ENCODE measurements at regions of chr16 and their contacts with region 1.

Region 1: DNA sequence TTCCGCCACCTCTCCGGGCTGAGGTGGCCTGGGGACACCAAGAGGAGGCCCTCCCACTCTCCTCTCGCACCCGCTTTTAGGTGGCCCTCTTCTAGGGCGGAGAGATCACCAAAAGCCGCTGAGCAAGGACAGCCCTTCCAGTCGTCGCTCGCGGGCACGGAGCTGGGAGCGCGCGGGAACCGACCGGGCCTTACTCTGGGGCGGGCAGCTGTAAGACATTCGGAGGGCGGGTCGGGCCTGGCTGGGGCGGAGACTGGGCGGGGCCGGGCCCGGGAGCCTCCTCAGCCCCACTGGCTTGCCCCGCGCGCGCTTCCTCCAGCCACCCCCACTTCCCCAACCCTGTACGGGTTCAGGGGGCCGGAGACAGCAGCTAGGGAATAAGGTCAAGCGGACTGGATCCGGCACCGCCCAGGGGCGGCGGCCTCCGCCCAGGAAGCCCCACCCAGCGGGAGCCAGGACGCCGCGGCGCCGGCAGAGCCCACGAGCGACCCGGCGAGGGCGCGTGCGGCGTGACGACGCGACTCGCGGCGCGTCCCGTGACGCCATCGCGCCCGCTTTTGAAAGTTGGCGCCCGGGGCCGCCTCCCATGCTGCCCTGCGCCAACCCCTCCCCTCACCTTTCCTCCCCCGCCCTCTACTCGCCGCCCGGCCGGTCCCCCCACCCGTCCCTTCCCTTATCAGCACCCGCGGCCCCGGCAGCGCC is 351 bp upstream of the CTCF start:
- DNase-seq: peak; percentile 99
- ATAC-seq: peak; percentile 87
- H3K4me3 Mint-ChIP-seq: peak overlapping the region; percentile 84
- H3K27ac Mint-ChIP-seq: peak overlapping the region; percentile 85
- H3K4me1 Mint-ChIP-seq: peaks cover 41% of the 10 kb centered on the region
- H3K27me3 Mint-ChIP-seq: no peaks in the 10 kb centered on the region

Region 2: DNA sequence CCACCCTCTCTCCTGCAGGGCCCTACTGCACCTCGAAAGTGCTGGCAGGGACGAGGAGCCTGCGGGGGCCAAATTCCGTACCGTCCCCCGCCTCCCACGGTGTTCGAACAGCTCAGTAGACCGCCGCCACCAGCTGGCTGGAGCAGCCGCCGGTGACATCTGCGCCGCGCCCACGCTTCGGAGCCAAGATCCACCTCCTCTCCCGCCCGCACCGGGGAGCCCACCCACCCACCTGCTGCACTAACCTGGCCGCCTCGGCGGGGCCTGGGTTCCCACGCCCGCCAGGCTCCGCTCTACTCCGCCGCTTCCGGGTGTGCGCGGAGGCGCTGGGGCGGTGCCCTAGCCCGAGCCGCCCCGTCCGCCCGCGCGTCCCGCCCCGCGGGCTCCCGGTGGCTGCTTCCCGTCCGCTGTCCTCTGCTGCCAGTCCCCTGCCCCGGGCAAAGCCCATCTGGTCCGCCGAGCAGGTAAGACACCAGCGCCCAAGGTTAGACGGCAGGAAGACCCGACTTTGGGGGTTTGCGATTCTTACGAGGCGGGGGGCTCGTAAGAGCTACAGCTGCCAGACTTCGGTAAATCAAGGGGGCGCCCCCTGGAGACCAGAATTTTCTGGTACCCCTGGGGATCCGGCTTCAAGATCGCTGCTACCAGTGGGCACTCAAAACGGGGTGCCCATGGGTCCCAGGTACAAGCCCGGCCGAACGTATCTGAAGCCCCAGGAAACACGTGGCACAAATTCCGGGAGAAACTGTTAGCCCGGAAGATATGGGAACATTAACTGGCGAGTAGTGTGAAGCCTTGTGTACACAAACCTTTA is 402.2 kb before region 1 on chr16 and contains the starts of genes FBXL8 and TRADD:
- CTCF ChIA-PET with region 1: no interaction called
- POLR2A ChIA-PET with region 1: no interaction called
- intact Hi-C with region 1: loop called in 1 of 2 experiments (anchors 1 kb)
- DNase-seq: peak; percentile 88
- ATAC-seq: peak; percentile 63
- H3K4me3 Mint-ChIP-seq: peak within 1 kb of the TSS; percentile 91
- H3K27ac Mint-ChIP-seq: peak within 1 kb of the TSS; percentile 93
- H3K4me1 Mint-ChIP-seq: peaks cover 48% of the 10 kb centered on the region
- H3K27me3 Mint-ChIP-seq: peaks cover 12% of the 10 kb centered on the region
- total RNA-seq, gene FBXL8: 15.5 to 21.0 TPM
- total RNA-seq, gene TRADD: 22.0 to 34.0 TPM

Region 3: GRCh38 chr16:67246934-67247697 is 314.9 kb before region 1 on chr16 and contains the start of gene FHOD1:
- CTCF ChIA-PET with region 1: no interaction called
- POLR2A ChIA-PET with region 1: no interaction called
- intact Hi-C with region 1: loop called in 1 of 2 experiments (anchors 1 kb)
- DNase-seq: peak; percentile 99
- ATAC-seq: peak; percentile 74
- H3K4me3 Mint-ChIP-seq: peak within 1 kb of the TSS; percentile 87
- H3K27ac Mint-ChIP-seq: peak within 1 kb of the TSS; percentile 85
- H3K4me1 Mint-ChIP-seq: peaks cover 52% of the 10 kb centered on the region
- H3K27me3 Mint-ChIP-seq: peaks cover 11% of the 10 kb centered on the region
- total RNA-seq, gene FHOD1: 75.5 to 77.2 TPM

Region 4: GRCh38 chr16:67521095-67521804 is 40.7 kb before region 1 on chr16:
- CTCF ChIA-PET with region 1: interaction called, 8 read pairs
- POLR2A ChIA-PET with region 1: interaction called, 4 read pairs
- intact Hi-C with region 1: loop called (anchors 1 kb)
- DNase-seq: peak; percentile 99
- ATAC-seq: peak; percentile 94
- H3K4me3 Mint-ChIP-seq: peak overlapping the region; percentile 80
- H3K27ac Mint-ChIP-seq: peak overlapping the region; percentile 97
- H3K4me1 Mint-ChIP-seq: peaks cover 10% of the 10 kb centered on the region
- H3K27me3 Mint-ChIP-seq: no peaks in the 10 kb centered on the region

Region 5: DNA sequence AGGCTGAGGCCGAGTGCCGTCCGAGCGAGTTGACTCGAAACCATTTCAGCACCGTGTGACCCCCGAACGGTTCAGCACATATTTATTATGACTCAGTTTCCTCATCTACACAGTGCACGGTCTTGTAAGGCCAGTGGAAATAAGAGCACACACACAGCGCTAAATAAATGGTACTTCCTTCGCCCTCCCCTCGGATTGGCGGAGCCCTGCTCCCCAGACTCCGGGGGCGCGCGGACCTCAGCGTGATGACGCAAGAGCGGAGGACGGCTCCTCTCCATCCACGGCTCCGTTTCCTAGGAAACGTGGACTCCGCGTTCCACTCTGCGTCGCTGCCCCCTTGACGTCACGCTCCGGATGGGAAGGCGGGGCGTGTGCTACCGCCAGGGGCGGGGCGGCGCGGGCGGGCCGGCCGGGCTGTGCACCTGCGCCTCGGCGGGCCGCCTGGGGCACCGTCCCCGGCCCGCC is 98.6 kb after region 1 on chr16 and contains the start of gene PARD6A:
- CTCF ChIA-PET with region 1: interaction called, 19 read pairs
- POLR2A ChIA-PET with region 1: interaction called, 13 read pairs
- intact Hi-C with region 1: loop called (anchors 1 kb)
- DNase-seq: peak; percentile 98
- ATAC-seq: peak; percentile 83
- H3K4me3 Mint-ChIP-seq: peak within 1 kb of the TSS; percentile 90
- H3K27ac Mint-ChIP-seq: peak within 1 kb of the TSS; percentile 91
- H3K4me1 Mint-ChIP-seq: peaks cover 21% of the 10 kb centered on the region
- H3K27me3 Mint-ChIP-seq: no peaks in the 10 kb centered on the region
- total RNA-seq, gene PARD6A: 7.8 to 8.7 TPM

Region 6: DNA sequence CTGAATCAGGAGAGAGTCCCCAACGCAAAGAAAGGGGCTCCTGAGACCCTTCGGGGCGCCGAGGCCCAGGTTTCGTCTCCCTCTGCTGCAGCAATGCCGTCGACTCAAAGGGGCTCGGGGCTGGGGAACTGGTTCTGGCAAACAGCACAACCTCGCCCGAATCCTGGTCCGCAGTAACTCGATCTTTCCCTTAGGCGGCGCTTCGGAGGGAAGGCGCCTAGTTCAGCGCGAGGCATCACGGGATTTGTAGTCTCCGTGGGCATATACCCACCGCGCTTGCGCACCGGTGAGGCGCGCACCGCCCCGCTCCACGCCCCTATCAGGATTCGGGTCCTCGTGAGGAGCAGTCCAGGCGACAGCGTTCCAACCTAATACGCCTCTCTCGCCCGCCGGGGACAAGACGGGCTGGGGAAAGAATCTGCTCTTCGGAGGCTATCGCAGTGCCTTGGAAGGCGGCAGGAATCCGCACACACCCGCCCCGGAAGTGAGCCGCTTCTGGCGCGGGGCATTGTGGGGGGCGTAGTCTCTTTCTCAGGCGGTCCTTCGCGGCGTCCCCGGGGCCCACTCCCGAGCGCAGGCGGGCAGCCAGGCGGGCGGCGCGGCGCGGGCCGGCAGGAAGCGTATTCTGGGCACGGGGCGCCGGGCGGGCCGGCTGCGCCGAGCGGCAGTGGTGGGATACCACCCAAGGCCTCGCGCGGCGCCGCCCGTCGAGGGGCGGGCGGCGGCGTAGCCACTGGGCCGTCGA is 280.0 kb after region 1 on chr16 and contains the start of gene THAP11:
- CTCF ChIA-PET with region 1: no interaction called
- POLR2A ChIA-PET with region 1: no interaction called
- intact Hi-C with region 1: loop called in 1 of 2 experiments (anchors 1 kb)
- DNase-seq: peak; percentile 97
- ATAC-seq: peak; percentile 55
- H3K4me3 Mint-ChIP-seq: peak within 1 kb of the TSS; percentile 94
- H3K27ac Mint-ChIP-seq: peak within 1 kb of the TSS; percentile 97
- H3K4me1 Mint-ChIP-seq: peaks cover 33% of the 10 kb centered on the region
- H3K27me3 Mint-ChIP-seq: no peaks in the 10 kb centered on the region
- total RNA-seq, gene THAP11: 31.8 to 34.5 TPM

Region 7: GRCh38 chr16:68085259-68086071 is 523.5 kb after region 1 on chr16 and contains the start of gene NFATC3:
- CTCF ChIA-PET with region 1: no interaction called
- POLR2A ChIA-PET with region 1: no interaction called
- intact Hi-C with region 1: loop called in 1 of 2 experiments (anchors 1 kb)
- DNase-seq: peak; percentile 100
- ATAC-seq: peak; percentile 62
- H3K4me3 Mint-ChIP-seq: peak within 1 kb of the TSS; percentile 89
- H3K27ac Mint-ChIP-seq: peak within 1 kb of the TSS; percentile 94
- H3K4me1 Mint-ChIP-seq: peaks cover 64% of the 10 kb centered on the region
- H3K27me3 Mint-ChIP-seq: no peaks in the 10 kb centered on the region
- total RNA-seq, gene NFATC3: 68.4 to 81.2 TPM

Measured in activated CD4-positive, alpha-beta T cell treated with anti-CD3 and anti-CD28 coated beads for 36 hours (primary cell).